AG04450 (cell line): ENCODE measurements at regions of chr17 and their contacts with region 1.

Region 1: DNA sequence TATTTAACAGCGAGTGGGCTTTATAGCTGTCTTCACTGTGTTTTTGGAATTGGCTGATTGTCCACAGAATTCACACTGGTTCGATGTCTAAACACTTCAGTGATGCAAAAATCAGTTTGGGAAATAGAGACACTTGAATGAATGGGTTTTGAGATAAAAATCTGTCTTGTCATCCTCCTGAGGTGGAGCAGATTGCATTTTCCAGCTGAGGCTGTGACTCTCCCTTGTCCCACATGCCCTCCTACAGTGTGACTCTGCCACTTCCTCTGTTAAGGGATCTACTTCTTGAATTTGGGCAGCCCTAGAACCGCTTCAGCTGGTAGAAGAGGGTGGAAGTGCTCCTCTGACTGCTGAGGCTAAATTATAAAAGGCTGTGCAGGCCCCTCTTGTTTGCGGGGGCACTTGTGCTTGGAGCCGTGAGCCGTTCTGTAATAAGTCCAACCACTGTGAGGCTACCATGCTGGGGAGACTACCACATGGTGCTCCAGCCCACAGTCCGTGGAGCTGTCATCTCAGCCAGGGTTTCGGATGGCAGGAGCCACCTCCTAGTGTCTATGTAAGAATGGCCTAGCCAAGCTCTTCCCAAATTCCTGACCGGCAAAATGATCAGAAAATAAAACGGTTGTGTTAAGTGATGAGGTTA is 175.9 kb downstream of the SPECC1 start:
- DNase-seq: no peak
- H3K4me3 ChIP-seq: no peak overlapping the region
- H3K27ac ChIP-seq: no peak overlapping the region
- H3K27me3 ChIP-seq: no peaks in the 10 kb centered on the region
- CTCF ChIP-seq: no peak

Region 2: DNA sequence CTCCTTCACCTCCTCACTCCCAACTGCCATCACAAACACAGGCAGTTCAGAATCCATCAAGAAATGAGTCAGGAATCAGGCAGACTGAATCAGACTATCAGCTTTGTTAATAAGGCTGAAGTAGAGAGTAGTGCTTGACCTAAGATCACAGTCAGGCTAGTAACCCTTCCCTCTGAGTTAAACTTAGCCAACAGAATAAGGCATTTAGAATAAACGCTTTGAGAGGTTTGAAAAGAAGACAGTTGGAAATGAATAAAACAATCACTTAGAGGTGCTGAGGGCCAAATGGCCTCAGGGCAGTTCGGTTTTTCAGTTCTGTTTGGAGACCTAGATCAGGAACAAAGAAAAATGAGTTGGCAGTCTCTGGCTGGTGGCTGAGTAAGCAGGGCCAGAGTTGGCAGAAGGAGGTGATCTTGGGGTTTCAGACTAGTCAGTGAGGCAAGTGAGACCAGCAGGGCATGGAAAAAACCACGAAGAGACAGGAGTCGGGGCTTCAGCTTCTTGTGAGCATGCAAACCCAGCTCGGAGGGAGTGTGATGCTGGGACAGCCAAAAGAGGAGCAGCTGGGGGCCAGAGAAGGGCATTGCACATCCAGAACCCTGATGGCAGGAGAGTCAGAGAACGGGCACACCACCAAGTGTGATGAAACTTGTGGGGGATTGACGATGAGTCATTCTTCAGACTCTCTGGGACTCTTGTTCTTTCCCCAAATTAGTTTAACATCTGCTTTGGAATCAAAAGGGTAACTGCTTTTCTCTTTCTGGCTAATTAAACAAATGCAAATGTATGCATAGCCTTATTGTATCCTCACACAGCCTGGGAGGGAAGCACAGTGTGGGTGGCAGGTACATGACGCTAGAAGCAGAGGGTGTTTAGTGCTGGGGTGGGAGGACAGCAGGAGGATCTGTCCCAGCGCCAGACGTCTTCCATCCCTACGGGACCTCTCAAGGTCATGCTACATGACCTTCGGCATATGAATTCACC is 121.1 kb before region 1 on chr17:
- CTCF ChIA-PET with region 1: no interaction called
- POLR2A ChIA-PET with region 1: no interaction called
- DNase-seq: peak; percentile 77
- H3K4me3 ChIP-seq: no peak overlapping the region
- H3K27ac ChIP-seq: peak overlapping the region; percentile 66
- H3K27me3 ChIP-seq: no peaks in the 10 kb centered on the region
- CTCF ChIP-seq: no peak

Region 3: GRCh38 chr17:20299013-20299412 is 113.9 kb after region 1 on chr17:
- CTCF ChIA-PET with region 1: interaction called, 10 read pairs
- POLR2A ChIA-PET with region 1: no interaction called
- DNase-seq: no peak
- H3K4me3 ChIP-seq: no peak overlapping the region
- H3K27ac ChIP-seq: no peak overlapping the region
- H3K27me3 ChIP-seq: no peaks in the 10 kb centered on the region
- CTCF ChIP-seq: no peak